Prostate gland (tissue), 2 donors: ENCODE measurements at regions of chr6 and their contacts with region 1.

Region 1: DNA sequence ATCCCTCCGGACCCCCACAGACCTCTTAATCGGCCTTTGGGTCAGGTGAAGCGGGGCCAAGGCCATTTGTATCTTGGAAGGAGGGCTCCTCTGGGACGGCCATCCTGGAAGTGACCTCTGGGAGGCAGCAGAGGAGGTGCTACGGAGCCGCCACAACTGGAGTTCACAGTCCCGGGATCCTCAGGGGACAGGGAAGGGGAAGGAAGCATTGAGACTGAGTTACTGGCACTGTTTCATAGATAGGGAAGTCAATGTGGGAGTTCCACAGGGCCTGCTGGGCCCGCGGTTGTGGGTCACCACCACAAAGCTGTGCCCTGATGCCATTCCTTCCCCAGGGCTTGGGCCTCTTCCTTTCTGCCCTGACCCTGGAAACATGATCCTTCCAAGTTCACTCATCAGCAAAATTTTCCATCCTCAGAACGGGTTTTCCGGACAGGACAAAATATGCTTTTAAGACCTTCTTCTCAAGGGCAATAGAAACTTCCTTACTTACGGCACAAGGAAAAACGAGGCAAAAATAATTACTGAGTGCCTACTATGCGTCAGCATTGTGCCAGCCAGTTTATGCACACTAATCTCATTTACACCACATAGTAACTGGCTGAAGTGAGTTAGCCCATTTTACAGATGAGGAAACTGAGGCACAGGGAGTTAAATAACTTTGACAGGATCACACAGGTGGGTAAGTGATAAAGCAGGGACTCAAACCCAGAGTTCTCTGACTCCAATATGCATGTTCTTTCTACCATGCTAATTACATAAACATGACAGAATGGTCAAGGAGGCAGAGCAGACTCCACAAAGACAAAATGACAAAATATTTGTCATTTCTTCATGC is 143.8 kb downstream of the UNC5CL start:
- DNase-seq: peak; percentile 13
- H3K4me3 ChIP-seq: no peak overlapping the region
- H3K27ac ChIP-seq: no peak overlapping the region
- H3K4me1 ChIP-seq: no peaks in the 10 kb centered on the region
- H3K27me3 ChIP-seq: no peaks in the 10 kb centered on the region
- CTCF ChIP-seq: peak in 3 of 4 experiments; percentile 32 to 54 (median 33)
- POLR2A ChIP-seq: no peak

Region 2: DNA sequence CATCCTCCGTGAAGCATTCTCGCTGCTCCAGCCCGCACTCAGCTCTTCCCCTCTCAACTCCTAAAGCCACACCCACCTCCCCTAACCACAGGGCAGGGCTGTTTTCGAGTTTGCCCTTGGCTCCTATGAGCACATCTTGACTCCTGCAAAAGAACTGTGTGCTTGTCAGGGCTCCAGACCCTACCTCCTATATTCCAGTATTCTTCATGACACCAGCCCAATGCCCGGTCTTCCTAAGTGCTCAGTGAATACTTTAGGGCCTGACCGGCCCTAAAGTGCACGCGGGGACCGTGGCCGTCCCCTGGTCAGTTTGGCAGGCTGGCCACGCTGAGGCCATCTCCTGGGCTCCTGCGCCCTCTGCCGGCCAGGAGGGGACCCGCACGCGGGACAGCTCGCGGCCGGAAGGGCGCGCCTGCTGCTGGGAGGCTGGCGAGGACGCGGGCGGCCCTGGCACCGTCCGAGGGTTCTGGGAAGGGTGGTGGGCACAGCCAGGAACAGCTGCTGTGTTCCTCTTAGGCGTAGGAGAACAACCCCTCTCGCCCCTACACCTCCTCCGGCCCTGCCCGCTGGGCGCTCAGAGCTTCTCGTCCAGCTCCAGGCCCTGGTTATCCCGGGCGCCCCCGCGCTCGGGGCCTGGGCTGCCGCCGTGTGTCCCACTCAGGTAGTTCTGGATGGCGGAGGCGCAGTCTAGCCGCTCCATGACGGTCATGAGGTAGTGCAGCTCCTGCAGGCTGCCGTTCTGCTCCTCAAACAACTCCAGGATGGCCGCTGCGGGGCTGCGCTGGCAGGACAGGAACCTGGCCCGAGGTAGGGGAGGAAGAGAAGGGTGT is 132.8 kb after region 1 on chr6:
- intact Hi-C with region 1: loop called (anchors 10 kb)
- DNase-seq: peak; percentile 76
- H3K4me3 ChIP-seq: peak overlapping the region; percentile 33 to 41
- H3K27ac ChIP-seq: peak overlapping the region; percentile 70 to 75
- H3K4me1 ChIP-seq: no peaks in the 10 kb centered on the region
- H3K27me3 ChIP-seq: no peaks in the 10 kb centered on the region
- CTCF ChIP-seq: peak; percentile 91 to 99 (median 96)
- POLR2A ChIP-seq: no peak